KBM-7 (cell line): ENCODE measurements at regions of chr22 and their contacts with region 1.

Region 1: GRCh38 chr22:46542011-46542985 is 4.9 kb upstream of the CELSR1 start:
- DNase-seq: peak; percentile 77

Region 2: GRCh38 chr22:46013460-46014416 is 528.6 kb before region 1 on chr22:
- in situ Hi-C with region 1: loop called (anchors 25 kb)
- DNase-seq: peak; percentile 94

Region 3: GRCh38 chr22:46355371-46355995 is 186.8 kb before region 1 on chr22:
- in situ Hi-C with region 1: loop called (anchors 10 kb)
- DNase-seq: peak; percentile 59

Region 4: DNA sequence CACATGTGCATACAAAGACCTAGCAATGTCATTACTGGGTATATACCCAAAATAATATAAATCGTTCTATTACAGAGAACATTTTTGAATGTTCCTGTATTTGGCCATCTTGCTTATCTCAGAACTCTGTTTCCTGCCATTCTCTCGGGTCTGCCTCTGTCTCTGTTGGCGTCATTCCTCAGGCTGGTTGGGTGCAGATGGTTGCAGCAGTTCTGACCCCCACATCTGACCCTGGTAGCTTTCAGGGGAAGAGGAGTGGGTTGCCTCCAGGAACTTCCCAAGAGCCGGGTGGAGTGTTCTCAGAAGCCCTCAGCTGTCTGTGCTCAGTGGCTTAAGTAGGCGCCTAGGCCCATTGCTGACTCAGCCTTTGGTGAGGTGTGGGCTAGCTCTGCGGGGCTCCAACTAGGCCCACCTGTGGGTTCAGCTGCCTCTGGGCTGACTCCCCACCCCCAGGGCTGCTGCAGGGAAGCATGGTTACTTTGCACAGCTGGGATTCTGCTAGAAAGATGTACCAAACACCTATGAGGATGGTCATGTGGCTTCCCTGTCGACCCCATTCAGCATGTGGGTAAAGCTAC is 334.1 kb after region 1 on chr22:
- in situ Hi-C with region 1: no loop called
- DNase-seq: no peak